GM18951 (cell line): ENCODE measurements at regions of chr3 and their contacts with region 1.

Region 1: GRCh38 chr3:123328851-123329635 is 119.8 kb downstream of the ADCY5 start:
- POLR2A ChIP-seq: no peak

Region 2: DNA sequence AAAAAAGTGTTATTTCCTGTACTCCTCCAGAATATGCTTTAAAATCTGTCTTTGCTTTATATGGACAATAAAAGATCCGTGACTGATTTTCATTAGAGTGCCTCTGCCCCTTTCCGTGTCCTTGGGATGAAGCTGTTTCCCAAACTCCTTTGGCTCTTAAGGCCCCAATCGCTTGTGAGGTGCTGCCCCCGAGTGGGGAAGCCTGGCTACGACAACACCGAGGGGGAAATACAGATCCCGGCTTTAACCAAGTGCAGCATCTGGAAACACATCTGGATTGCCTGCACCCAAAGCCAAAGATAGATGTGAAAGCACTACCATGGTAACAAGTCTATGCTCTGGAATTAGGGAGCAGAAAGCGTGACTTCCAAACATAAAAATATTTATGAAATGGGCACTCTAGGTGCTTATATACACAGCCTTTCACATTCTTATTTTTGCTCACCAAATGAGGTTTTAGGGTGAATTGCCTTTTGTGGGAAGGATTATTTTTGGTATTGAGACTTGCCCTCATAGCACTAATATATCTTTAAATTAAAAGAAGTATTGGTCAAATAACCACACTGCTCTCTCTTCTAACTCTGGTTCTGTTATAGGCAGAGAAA is 160.5 kb after region 1 on chr3:
- in situ Hi-C with region 1: loop called (anchors 10 kb)
- POLR2A ChIP-seq: no peak

Region 3: GRCh38 chr3:123559040-123559861 is 230.2 kb after region 1 on chr3:
- in situ Hi-C with region 1: loop called (anchors 10 kb)
- POLR2A ChIP-seq: no peak